Activated naive CD8-positive, alpha-beta T cell treated with anti-CD3 and anti-CD28 coated beads, Interleukin-2, amount 10 ng/mL, durations not matched to agents 7 days and 5 days (primary cell): ENCODE measurements at regions of chr17 and their contacts with region 1.

Region 1: DNA sequence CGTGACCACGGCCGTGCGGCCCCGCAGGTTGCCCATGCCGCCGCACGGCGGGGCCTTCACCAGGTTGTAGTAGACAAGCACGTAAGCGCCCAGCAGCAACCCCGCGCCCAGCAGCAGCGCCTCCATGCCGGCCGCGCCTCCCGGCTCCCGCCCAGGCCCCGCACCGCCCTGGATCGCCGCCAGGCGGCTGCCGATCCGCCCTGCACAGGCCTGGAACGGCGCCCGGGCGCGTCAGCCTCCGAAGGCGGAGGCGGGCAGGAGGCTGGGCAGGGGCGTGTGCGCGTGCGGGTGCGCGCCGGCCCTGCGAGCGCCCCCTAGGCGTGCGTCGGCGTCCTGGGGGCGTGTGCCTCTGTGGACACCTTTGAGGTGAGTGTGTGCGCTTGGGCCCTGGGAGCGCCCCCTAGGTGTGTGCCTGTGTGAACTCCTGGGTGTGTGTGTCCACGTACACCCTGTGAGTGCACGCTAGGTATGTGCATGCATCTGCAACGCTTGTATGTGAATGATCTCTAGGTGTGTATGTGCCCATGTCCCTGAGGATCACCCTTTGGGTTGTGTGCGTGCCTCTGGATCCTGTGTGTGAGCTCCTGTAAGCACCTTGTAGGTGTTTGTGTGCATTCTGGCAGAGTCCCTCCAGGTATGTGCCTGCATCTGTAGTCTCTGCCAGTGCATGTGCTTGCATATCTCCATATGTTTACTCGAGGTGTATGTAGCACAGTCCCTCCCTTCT is at the start of gene DHRS13:
- DNase-seq: peak; percentile 99
- ATAC-seq: peak; percentile 95
- H3K4me3 Mint-ChIP-seq: peak within 1 kb of the TSS; percentile 90
- H3K27ac Mint-ChIP-seq: peak within 1 kb of the TSS; percentile 88
- H3K4me1 Mint-ChIP-seq: peaks cover 38% of the 10 kb centered on the region
- H3K27me3 Mint-ChIP-seq: no peaks in the 10 kb centered on the region
- total RNA-seq, gene DHRS13: 31.6 to 32.0 TPM

Region 2: DNA sequence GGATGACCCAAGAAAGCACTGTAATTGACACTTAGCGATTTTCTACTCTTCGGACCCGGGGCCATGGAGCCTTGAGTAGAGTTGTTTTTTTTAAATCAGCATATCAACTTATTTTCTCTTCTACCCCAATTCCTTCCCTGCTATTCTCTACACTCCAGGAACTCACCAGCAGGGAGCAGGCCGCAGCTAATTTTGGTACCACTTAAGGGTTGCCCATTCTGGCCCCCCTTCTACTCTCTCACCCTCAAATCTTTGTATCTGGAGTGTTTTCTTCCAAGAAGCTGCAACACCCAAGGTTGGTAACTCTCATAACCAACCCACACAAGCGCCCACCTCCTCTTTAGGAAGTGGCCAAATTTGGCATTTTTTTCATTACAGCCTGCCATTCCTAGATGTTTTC is 53.7 kb before region 1 on chr17:
- POLR2A ChIA-PET with region 1: interaction called, 10 read pairs
- DNase-seq: no peak
- ATAC-seq: peak; percentile 65
- H3K4me3 Mint-ChIP-seq: no peak overlapping the region
- H3K27ac Mint-ChIP-seq: no peak overlapping the region
- H3K4me1 Mint-ChIP-seq: peaks cover 7% of the 10 kb centered on the region
- H3K27me3 Mint-ChIP-seq: no peaks in the 10 kb centered on the region

Region 3: DNA sequence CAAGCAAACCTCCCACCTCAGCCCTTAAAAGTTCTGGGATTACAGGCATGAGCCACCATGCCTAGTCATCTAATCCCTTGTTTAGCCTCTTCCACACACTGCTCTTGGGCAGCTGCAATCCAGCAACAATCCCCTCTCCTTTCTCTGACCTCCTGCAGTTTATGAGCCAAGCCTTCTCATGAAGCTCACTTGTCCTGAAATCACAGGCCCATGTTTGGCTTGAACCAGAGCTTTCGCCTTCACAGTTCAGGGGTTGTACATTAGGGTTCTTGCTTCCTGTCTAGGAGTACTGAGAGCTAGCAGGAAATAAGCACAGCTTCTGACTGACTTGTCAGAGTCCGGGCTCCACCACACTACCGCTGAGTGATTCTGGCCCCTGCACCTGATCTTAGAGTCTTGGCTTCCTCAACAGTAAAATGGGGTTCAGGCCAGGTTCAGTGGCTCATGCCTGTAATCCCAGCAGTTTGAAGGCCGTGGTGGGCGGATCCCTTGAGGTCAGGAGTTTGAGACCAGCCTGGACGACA is 31.9 kb before region 1 on chr17:
- POLR2A ChIA-PET with region 1: interaction called, 16 read pairs
- DNase-seq: peak; percentile 58
- ATAC-seq: peak; percentile 100
- H3K4me3 Mint-ChIP-seq: peak overlapping the region; percentile 80
- H3K27ac Mint-ChIP-seq: peak overlapping the region; percentile 100
- H3K4me1 Mint-ChIP-seq: peaks cover 10% of the 10 kb centered on the region
- H3K27me3 Mint-ChIP-seq: no peaks in the 10 kb centered on the region

Region 4: GRCh38 chr17:28892024-28892423 is 11.0 kb before region 1 on chr17:
- POLR2A ChIA-PET with region 1: interaction called, 21 read pairs
- DNase-seq: no peak
- ATAC-seq: no peak
- H3K4me3 Mint-ChIP-seq: peak overlapping the region; percentile 15
- H3K27ac Mint-ChIP-seq: peak overlapping the region; percentile 72
- H3K4me1 Mint-ChIP-seq: peaks cover 52% of the 10 kb centered on the region
- H3K27me3 Mint-ChIP-seq: no peaks in the 10 kb centered on the region

Region 5: DNA sequence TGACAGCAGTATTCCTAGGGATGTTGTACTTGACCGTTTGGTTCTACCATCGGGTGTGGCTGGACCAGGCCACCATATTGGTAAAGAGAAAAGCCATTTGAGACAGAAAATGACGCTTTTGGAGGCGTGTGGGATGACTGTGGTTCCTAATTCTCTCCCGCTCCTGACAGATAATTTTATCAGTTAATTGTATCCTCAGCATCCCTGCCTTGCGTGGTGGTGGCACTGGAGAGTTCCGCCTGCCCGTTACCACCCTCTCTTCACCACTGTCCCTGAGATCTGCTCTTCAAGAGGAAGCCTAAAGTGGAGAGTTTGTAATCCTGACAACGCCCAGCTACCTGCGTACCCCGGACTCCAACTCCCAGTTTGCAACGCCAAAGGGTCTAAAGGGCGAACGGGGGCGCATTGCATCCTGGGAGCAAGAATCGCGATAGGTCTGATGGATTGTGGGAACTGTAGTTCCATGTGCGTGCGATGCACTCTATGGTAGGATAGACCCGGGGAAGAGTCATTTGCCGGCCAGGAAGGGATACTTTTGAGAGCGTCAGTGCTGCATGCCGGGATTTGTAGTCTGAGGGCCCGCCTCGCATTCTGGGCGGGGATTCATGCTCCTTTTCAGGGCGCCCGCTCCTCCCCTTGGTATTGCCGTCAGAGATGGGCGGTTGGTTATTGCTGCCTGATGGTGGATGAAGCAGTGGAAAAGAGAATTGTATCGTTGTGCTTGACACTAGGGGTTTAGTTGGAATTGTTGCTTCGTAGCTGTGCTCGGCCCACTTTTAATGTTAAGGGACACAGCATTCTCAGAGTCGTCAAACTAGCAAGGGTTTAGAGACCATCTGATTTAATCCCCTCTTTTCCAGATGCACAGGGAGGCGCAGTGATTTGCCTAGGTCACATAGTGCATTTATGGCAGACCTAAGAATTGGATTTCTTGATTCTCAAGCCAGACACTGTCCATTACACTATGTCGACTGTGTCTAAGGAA is 49.3 kb after region 1 on chr17:
- POLR2A ChIA-PET with region 1: interaction called, 10 read pairs
- DNase-seq: peak; percentile 88
- ATAC-seq: peak; percentile 67
- H3K4me3 Mint-ChIP-seq: no peak overlapping the region
- H3K27ac Mint-ChIP-seq: no peak overlapping the region
- H3K4me1 Mint-ChIP-seq: peaks cover 19% of the 10 kb centered on the region
- H3K27me3 Mint-ChIP-seq: no peaks in the 10 kb centered on the region